ENCODE measurements at regions of chr11 and their contacts with region 1.

Region 1: GRCh38 chr11:1181867-1182535 is 24.2 kb downstream of the MUC5AC start:
- DNase-seq: peak in 1 of 2 donors; percentile 8
- ATAC-seq: no peak
- H3K4me3 ChIP-seq: no peak overlapping the region
- H3K27ac ChIP-seq: no peak overlapping the region
- H3K4me1 ChIP-seq: no peaks in the 10 kb centered on the region
- H3K27me3 ChIP-seq: peaks cover 0 to 24% (median 5%) of the 10 kb centered on the region in 7 donors
- CTCF ChIP-seq: no peak

Region 2: DNA sequence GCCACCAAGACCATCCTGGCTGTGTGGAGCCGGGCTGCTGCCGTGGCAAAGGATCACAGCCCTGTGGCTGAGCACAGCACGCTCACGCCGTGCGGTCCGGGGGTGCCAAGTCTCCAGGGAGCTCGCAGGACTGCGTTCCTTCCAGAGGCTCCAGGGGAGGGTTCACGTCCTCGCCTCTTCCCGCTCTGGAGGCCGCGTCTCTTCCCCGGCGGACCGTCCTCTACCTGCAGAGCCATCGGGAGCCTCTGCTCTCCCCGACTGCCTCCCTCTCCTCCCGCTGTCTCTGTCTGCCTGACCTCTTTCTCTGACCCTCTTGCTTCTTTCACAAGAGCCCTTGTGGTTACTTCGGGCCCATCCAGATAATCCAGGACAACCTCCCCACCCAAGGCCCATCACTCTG is 35.6 kb before region 1 on chr11:
- intact Hi-C with region 1: no loop called
- DNase-seq: no peak
- ATAC-seq: no peak
- H3K4me3 ChIP-seq: no peak overlapping the region
- H3K27ac ChIP-seq: no peak overlapping the region
- H3K4me1 ChIP-seq: peaks cover 0 to 7% (median 0%) of the 10 kb centered on the region in 9 donors
- H3K27me3 ChIP-seq: peaks cover 0 to 5% (median 0%) of the 10 kb centered on the region in 7 donors
- CTCF ChIP-seq: no peak

Region 3: GRCh38 chr11:1157645-1158591 is 24.1 kb before region 1 on chr11 and contains the start of gene MUC5AC:
- intact Hi-C with region 1: loop called in 1 of 10 experiments (anchors 2 kb)
- DNase-seq: peak in 1 of 2 donors; percentile 8
- ATAC-seq: no peak
- H3K4me3 ChIP-seq: no peak within 1 kb of the TSS
- H3K27ac ChIP-seq: no peak within 1 kb of the TSS
- H3K4me1 ChIP-seq: peaks cover 0 to 5% (median 0%) of the 10 kb centered on the region in 9 donors
- H3K27me3 ChIP-seq: peaks cover 0 to 23% (median 7%) of the 10 kb centered on the region in 7 donors
- CTCF ChIP-seq: no peak
- total RNA-seq, gene MUC5AC: not detected

Measured in heart right ventricle (tissue), 16 donors.